Ovary (tissue), 10 donors: ENCODE measurements at regions of chr7 and their contacts with region 1.

Region 1: GRCh38 chr7:25054819-25055519 is 70.1 kb downstream of the CYCS start:
- DNase-seq: no peak
- H3K4me3 ChIP-seq: no peak overlapping the region
- H3K27ac ChIP-seq: no peak overlapping the region
- H3K4me1 ChIP-seq: no peaks in the 10 kb centered on the region
- H3K27me3 ChIP-seq: no peaks in the 10 kb centered on the region
- CTCF ChIP-seq: no peak
- EP300 ChIP-seq: no peak
- POLR2A ChIP-seq: no peak

Region 2: DNA sequence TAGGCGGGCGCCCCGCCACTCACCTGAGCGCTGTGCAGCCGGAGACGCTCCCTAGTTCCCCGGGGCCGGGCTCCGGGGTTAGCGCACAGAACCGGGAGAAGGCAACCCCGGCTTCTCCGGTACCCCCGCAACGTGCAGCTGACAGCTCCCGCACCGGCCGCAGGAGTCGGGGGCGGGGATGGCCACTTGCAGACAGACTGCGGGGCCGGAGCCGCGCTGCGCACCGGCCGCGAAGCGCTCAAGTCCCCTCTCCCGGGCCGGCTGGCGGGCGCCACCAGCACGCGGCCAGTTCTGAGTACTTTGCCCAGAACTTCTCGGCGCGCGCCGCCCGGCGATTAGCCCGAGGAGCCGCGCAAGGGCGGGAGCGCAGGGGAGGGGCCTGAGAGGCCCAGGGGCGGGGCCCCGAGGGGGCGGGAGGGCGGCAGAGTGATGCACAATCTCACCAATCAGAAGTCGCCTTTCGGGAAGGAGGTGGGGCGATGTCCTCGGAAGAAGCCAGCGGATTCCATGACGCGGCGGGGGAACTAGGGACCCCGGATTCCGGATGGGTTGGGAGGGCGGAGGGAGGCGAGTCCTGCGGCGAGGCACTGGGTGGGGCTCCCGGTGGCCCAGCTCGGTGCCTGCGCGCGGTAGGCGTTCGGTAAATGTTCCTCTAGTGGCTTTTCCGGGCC is 75.0 kb before region 1 on chr7 and contains the start of gene OSBPL3:
- intact Hi-C with region 1: loop called in 1 of 4 experiments (anchors 10 kb)
- DNase-seq: peak; percentile 93 to 98 (median 96)
- H3K4me3 ChIP-seq: peak within 1 kb of the TSS; percentile 78
- H3K27ac ChIP-seq: peak within 1 kb of the TSS; percentile 65 to 86
- H3K4me1 ChIP-seq: peaks cover 3% of the 10 kb centered on the region
- H3K27me3 ChIP-seq: no peaks in the 10 kb centered on the region
- CTCF ChIP-seq: no peak
- EP300 ChIP-seq: no peak
- POLR2A ChIP-seq: peak; percentile 44
- total RNA-seq, gene OSBPL3: 8.4 to 29.1 (median 13.7) TPM

Region 3: GRCh38 chr7:25139536-25139935 is 84.6 kb after region 1 on chr7:
- intact Hi-C with region 1: no loop called
- DNase-seq: no peak
- H3K4me3 ChIP-seq: no peak overlapping the region
- H3K27ac ChIP-seq: no peak overlapping the region
- H3K4me1 ChIP-seq: no peaks in the 10 kb centered on the region
- H3K27me3 ChIP-seq: no peaks in the 10 kb centered on the region
- CTCF ChIP-seq: no peak
- EP300 ChIP-seq: no peak
- POLR2A ChIP-seq: no peak